Activated CD8-positive, alpha-beta memory T cell treated with anti-CD3 and anti-CD28 coated beads, Interleukin-2, amount 10 ng/mL, durations not matched to agents 7 days and 5 days (primary cell): ENCODE measurements at regions of chr2 and their contacts with region 1.

Region 1: DNA sequence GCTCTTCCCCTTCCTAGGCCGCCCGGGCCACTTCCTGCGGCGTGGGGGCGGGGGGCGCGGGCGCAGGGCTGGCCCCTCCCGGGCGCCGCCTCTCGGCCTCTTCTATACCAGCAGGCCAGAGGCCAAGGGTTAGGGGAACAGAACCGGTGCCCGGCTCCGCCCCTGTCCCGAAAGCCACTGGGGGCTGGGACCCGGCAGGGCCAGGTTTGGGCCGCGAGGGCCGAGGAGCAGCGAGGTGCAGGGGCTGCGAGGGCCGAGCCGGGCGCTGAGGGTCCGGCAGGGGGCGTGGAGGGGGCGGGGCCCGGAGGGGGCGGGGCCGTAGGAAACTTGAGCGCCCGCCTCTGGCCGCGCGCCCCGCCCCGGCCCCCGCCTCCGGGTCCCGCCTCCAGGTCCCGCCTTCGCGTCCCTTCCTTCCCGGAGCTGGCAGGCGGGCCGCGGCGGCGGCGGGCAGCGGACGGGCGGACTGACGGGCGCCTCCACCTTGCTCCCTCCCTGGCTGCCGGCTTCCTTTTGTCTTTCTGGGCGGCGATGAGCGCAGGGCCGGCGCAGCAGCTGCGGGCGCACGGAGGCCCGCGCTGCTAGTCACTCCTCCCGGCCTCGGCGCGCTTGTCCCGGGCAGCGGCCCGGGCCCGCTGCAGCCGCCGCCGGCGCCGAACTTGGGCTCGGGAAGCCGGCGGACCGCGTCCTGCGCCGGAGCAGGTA is at the start of gene HPCAL1:
- DNase-seq: peak; percentile 90
- ATAC-seq: peak; percentile 77
- H3K4me3 Mint-ChIP-seq: peak within 1 kb of the TSS; percentile 97
- H3K27ac Mint-ChIP-seq: peak within 1 kb of the TSS; percentile 76
- H3K4me1 Mint-ChIP-seq: peaks cover 62% of the 10 kb centered on the region
- H3K27me3 Mint-ChIP-seq: no peaks in the 10 kb centered on the region
- total RNA-seq, gene HPCAL1: 29.0 to 47.0 TPM

Region 2: DNA sequence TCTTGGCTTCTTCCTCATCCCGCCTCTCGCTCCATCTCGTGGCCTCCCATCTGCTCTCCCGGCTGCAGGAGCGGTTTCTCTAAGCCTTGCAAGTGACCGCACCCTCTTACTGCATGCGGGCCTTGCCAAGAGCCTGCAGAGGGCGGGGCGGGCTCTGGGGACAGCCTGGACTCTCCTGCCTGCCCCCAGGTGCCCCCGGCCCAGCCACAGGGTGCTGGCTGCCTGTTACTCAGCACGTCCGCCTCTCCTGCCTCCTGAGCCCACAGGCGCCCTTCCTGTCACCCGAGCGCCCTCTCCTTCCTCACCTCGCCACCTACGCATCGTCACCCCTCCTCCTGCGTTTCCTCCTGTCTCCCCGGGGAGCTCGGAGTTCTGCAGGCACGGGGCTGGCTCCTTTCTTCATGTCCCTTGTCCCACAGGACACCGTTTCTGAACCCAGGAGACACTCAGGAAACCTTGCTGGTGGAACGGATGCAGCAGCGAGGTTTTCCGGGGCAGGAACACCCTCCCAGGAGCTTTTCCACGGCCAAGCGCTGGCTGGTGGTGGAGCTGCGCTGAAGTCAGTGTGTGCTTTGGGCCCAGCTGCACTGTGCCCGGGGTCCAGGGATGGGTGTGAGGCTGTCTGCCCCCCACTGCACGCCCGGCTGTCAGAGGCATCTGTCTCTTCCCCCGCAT is 28.5 kb after region 1 on chr2:
- CTCF ChIA-PET with region 1: interaction called, 63 read pairs
- DNase-seq: peak; percentile 87
- ATAC-seq: peak; percentile 83
- H3K4me3 Mint-ChIP-seq: peak overlapping the region; percentile 82
- H3K27ac Mint-ChIP-seq: peak overlapping the region; percentile 87
- H3K4me1 Mint-ChIP-seq: peaks cover 52% of the 10 kb centered on the region
- H3K27me3 Mint-ChIP-seq: no peaks in the 10 kb centered on the region